CD8-positive, alpha-beta T cell (primary cell): ENCODE measurements at regions of chr3 and their contacts with region 1.

Region 1: GRCh38 chr3:43340403-43340802 is 54.1 kb downstream of the SNRK start:
- DNase-seq: no peak
- ATAC-seq: no peak
- H3K4me3 ChIP-seq: no peak overlapping the region
- H3K4me3 Mint-ChIP-seq: no peak overlapping the region
- H3K27ac ChIP-seq: no peak overlapping the region
- H3K27ac Mint-ChIP-seq: peak overlapping the region; percentile 49
- H3K4me1 ChIP-seq: peaks cover 38% of the 10 kb centered on the region
- H3K4me1 Mint-ChIP-seq: peaks cover 47% of the 10 kb centered on the region
- H3K27me3 ChIP-seq: no peaks in the 10 kb centered on the region
- H3K27me3 Mint-ChIP-seq: no peaks in the 10 kb centered on the region
- CTCF ChIP-seq: no peak

Region 2: GRCh38 chr3:43326891-43327581 is 13.4 kb before region 1 on chr3:
- CTCF ChIA-PET with region 1: interaction called, 4 read pairs
- POLR2A ChIA-PET with region 1: interaction called, 3 read pairs
- intact Hi-C with region 1: loop called (anchors 2 kb)
- DNase-seq: peak in 1 of 9 experiments; percentile 51
- ATAC-seq: peak; percentile 73
- H3K4me3 ChIP-seq: no peak overlapping the region
- H3K4me3 Mint-ChIP-seq: peak overlapping the region; percentile 54
- H3K27ac ChIP-seq: peak overlapping the region; percentile 1 to 31
- H3K27ac Mint-ChIP-seq: peak overlapping the region; percentile 88
- H3K4me1 ChIP-seq: peaks cover 75% of the 10 kb centered on the region
- H3K4me1 Mint-ChIP-seq: peaks cover 88% of the 10 kb centered on the region
- H3K27me3 ChIP-seq: no peaks in the 10 kb centered on the region
- H3K27me3 Mint-ChIP-seq: no peaks in the 10 kb centered on the region
- CTCF ChIP-seq: no peak